Right ventricle myocardium superior (tissue), 1 donor: ENCODE measurements at regions of chr12 and their contacts with region 1.

Region 1: DNA sequence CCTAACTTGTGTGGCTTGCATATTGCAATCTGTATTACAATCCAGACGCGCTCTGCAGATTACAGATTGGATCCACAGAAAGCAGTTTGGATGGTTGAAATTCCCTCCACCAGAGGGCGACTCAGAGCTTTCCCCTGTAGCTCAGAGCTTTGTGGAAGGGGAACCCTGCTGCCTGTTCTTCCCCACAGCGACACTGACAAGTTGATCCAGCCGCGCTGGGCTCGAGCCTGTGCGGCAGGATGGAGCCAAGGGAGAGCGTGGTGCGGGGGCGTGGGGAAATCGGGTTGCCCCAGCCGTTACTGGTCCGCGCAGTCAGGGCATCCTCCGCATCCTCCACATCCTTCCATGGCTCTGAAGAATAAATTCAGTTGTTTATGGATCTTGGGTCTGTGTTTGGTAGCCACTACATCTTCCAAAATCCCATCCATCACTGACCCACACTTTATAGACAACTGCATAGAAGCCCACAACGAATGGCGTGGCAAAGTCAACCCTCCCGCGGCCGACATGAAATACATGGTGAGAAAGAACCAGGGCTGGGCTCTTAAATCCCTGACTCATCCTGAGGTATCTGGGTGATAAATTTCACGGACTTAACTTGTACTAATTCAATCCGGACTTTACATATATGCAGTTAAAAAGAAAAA is at the start of gene GLIPR1L1:
- DNase-seq: peak; percentile 82
- ATAC-seq: peak; percentile 87
- total RNA-seq, gene GLIPR1L1: not detected

Region 2: GRCh38 chr12:75390899-75391538 is 56.5 kb after region 1 on chr12 and contains the start of gene GLIPR1L2:
- intact Hi-C with region 1: loop called (anchors 10 kb)
- DNase-seq: peak; percentile 97
- ATAC-seq: peak; percentile 100
- total RNA-seq, gene GLIPR1L2: 2.4 TPM

Region 3: GRCh38 chr12:75480469-75480949 is 146.0 kb after region 1 on chr12 and contains the start of gene GLIPR1:
- intact Hi-C with region 1: loop called (anchors 10 kb)
- DNase-seq: peak; percentile 81
- ATAC-seq: peak; percentile 91
- total RNA-seq, gene GLIPR1: 10.9 TPM

Region 4: GRCh38 chr12:75784591-75784990 is 450.1 kb after region 1 on chr12:
- intact Hi-C with region 1: no loop called
- DNase-seq: peak; percentile 45
- ATAC-seq: peak; percentile 67